ENCODE measurements at regions of chr14 and their contacts with region 1.

Region 1: GRCh38 chr14:22556990-22557623 is 31.9 kb downstream of the DAD1 start:
- DNase-seq: peak; percentile 93
- ATAC-seq: peak; percentile 42
- H3K4me3 ChIP-seq: peak overlapping the region; percentile 7 to 71 (median 49)
- H3K4me3 Mint-ChIP-seq: peak overlapping the region; percentile 73
- H3K27ac ChIP-seq: peak overlapping the region; percentile 99 to 100
- H3K27ac Mint-ChIP-seq: peak overlapping the region; percentile 97
- H3K4me1 ChIP-seq: peaks cover 61 to 85% of the 10 kb centered on the region in 2 donors
- H3K4me1 Mint-ChIP-seq: peaks cover 84% of the 10 kb centered on the region
- H3K27me3 ChIP-seq: no peaks in the 10 kb centered on the region
- H3K27me3 Mint-ChIP-seq: peaks cover 3% of the 10 kb centered on the region
- CTCF ChIP-seq: peak; percentile 100

Region 2: DNA sequence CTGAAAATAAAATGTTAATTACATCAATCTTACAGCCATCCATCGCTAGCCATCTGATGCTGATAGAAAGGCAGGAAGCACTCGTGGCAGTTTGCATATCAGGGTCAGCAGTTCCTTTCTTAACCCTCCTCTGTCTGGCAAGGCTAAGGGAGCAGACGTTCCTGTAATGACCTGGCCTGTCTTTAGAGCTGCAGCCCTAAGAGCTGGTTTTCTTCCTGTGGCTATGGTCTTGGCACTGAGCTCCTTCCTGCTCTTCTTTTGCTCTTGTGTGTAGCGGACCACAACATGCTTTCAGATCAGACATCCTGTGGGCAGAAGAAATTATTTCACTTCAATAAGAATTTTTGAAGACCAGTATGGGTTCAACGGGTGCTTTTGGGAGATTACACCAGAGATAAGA is 138.5 kb before region 1 on chr14:
- CTCF ChIA-PET with region 1: interaction called, 11 read pairs
- POLR2A ChIA-PET with region 1: interaction called, 4 read pairs
- intact Hi-C with region 1: no loop called
- DNase-seq: no peak
- ATAC-seq: peak; percentile 15
- H3K4me3 ChIP-seq: no peak overlapping the region
- H3K4me3 Mint-ChIP-seq: peak overlapping the region; percentile 11
- H3K27ac ChIP-seq: no peak overlapping the region
- H3K27ac Mint-ChIP-seq: no peak overlapping the region
- H3K4me1 ChIP-seq: peaks cover 24% of the 10 kb centered on the region in 2 donors
- H3K4me1 Mint-ChIP-seq: peaks cover 26% of the 10 kb centered on the region
- H3K27me3 ChIP-seq: no peaks in the 10 kb centered on the region
- H3K27me3 Mint-ChIP-seq: no peaks in the 10 kb centered on the region
- CTCF ChIP-seq: no peak

Region 3: DNA sequence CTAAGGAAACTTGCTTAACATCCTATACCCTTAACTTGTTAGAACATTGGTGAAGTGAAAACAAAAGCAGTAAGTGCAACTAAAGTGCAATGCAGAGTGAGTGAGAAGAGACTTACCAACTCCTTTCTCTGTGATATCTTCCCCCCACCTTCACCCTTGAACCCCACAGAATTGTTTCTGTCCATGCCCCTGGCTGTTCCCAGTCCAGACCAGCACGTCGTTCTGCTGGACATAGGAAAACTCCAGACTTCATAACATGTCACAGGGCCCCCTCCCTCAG is 60.0 kb before region 1 on chr14:
- CTCF ChIA-PET with region 1: interaction called, 44 read pairs
- POLR2A ChIA-PET with region 1: interaction called, 9 read pairs
- intact Hi-C with region 1: loop called (anchors 2 kb)
- DNase-seq: no peak
- ATAC-seq: peak; percentile 13
- H3K4me3 ChIP-seq: no peak overlapping the region
- H3K4me3 Mint-ChIP-seq: peak overlapping the region; percentile 54
- H3K27ac ChIP-seq: no peak overlapping the region
- H3K27ac Mint-ChIP-seq: peak overlapping the region; percentile 89
- H3K4me1 ChIP-seq: peaks cover 17 to 48% of the 10 kb centered on the region in 2 donors
- H3K4me1 Mint-ChIP-seq: peaks cover 68% of the 10 kb centered on the region
- H3K27me3 ChIP-seq: no peaks in the 10 kb centered on the region
- H3K27me3 Mint-ChIP-seq: no peaks in the 10 kb centered on the region
- CTCF ChIP-seq: no peak

Region 4: DNA sequence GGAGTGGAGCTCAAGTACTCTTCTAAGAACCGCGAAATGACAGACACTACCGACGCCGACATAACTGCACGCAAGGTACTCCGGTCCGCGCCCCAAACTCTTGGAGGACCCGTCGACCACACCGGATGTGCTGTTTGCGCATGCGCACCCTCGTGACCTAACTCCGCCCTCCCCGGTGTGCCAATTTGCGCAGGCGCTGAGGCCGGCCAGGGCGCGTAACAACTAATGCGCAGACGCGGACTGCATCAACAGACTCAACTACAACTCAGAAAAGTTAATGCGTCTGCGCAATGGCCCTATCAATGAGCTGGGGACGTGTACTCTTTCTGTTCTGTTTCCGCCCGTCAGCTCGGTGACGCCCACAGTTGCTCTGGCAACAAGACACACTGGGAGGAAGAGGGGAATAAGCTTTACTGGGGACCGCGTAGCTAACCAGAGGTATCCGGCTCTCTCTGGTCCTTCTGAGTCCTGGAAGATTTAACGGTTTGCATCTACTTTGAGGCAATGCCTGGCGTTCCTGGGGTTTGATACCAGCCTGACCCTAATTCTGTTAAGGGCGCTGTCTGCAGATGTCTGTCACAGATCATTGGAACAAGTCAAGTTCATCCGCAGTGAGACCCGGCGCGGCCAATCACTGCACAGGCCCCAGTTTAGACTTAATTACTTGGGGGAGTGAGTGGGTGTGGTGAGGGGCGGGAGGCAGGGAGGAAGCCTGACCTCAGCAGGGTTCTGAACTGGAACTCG is 32.2 kb after region 1 on chr14 and contains the start of gene DAD1:
- CTCF ChIA-PET with region 1: interaction called, 16 read pairs
- POLR2A ChIA-PET with region 1: no interaction called
- intact Hi-C with region 1: loop called (anchors 1 kb)
- DNase-seq: peak; percentile 100
- ATAC-seq: peak; percentile 89
- H3K4me3 ChIP-seq: peak within 1 kb of the TSS; percentile 75 to 84 (median 78)
- H3K4me3 Mint-ChIP-seq: peak within 1 kb of the TSS; percentile 99
- H3K27ac ChIP-seq: peak within 1 kb of the TSS; percentile 97
- H3K27ac Mint-ChIP-seq: peak within 1 kb of the TSS; percentile 96
- H3K4me1 ChIP-seq: peaks cover 30% of the 10 kb centered on the region in 2 donors
- H3K4me1 Mint-ChIP-seq: peaks cover 53% of the 10 kb centered on the region
- H3K27me3 ChIP-seq: no peaks in the 10 kb centered on the region
- H3K27me3 Mint-ChIP-seq: peaks cover 2% of the 10 kb centered on the region
- CTCF ChIP-seq: no peak
- total RNA-seq, gene DAD1: 76.1 and 77.4 TPM in 2 replicates

Region 5: DNA sequence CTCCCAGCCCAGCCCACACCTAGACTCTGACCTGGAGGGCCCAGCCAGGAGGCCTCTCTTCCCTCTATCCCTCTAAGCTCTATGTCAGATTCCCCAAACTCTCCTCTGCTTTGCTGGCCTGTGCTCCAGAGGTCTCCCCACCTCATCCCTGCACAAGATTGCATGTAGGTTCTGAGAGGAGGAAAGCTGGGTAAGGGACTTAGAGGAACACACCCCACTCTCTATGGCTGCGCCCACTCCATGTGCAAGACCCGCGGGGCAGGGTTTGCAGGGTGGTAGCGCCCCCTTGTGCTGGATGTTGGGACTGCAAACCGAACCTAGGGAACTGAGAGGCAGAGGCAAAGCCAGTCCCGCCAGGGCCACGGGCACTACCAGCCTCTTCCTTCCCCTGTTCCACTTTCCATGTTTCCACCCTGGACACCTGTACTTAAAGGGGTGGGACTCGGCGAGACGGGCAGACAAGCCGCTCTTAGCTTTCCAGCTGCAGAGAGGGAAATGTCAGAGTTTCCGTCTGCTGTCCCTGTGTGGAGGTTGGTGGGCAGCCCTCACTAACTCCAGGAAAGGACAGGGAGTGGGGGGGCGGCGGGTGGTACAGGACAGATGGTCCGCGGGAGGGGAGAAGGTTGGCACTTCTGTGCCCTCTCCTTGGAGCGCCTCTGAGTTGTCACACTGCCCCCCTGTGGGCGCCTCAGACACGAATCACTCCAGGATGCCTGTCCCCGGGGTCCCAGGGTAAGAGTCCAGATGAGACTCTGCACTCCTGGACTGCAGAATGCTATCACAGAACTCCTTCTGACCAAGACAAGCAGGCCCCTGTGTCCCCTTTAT is 296.0 kb after region 1 on chr14:
- CTCF ChIA-PET with region 1: interaction called, 26 read pairs
- POLR2A ChIA-PET with region 1: interaction called, 3 read pairs
- intact Hi-C with region 1: loop called (anchors 1 kb)
- DNase-seq: peak; percentile 91
- ATAC-seq: peak; percentile 95
- H3K4me3 ChIP-seq: peak overlapping the region; percentile 49 to 72 (median 63)
- H3K4me3 Mint-ChIP-seq: peak overlapping the region; percentile 88
- H3K27ac ChIP-seq: peak overlapping the region in 1 of 2 donors; percentile 42
- H3K27ac Mint-ChIP-seq: peak overlapping the region; percentile 85
- H3K4me1 ChIP-seq: peaks cover 0 to 8% of the 10 kb centered on the region in 2 donors
- H3K4me1 Mint-ChIP-seq: peaks cover 6% of the 10 kb centered on the region
- H3K27me3 ChIP-seq: peaks cover 0 to 5% (median 0%) of the 10 kb centered on the region in 4 experiments
- H3K27me3 Mint-ChIP-seq: peaks cover 6% of the 10 kb centered on the region
- CTCF ChIP-seq: peak; percentile 87

Region 6: GRCh38 chr14:23057757-23058653 is 500.9 kb after region 1 on chr14:
- CTCF ChIA-PET with region 1: interaction called, 6 read pairs
- POLR2A ChIA-PET with region 1: no interaction called
- intact Hi-C with region 1: loop called (anchors 5 kb)
- DNase-seq: peak; percentile 89
- ATAC-seq: peak; percentile 64
- H3K4me3 ChIP-seq: peak overlapping the region; percentile 11 to 91 (median 68)
- H3K4me3 Mint-ChIP-seq: peak overlapping the region; percentile 95
- H3K27ac ChIP-seq: no peak overlapping the region
- H3K27ac Mint-ChIP-seq: peak overlapping the region; percentile 76
- H3K4me1 ChIP-seq: peaks cover 10 to 21% of the 10 kb centered on the region in 2 donors
- H3K4me1 Mint-ChIP-seq: peaks cover 18% of the 10 kb centered on the region
- H3K27me3 ChIP-seq: peaks cover 0 to 6% (median 0%) of the 10 kb centered on the region in 4 experiments
- H3K27me3 Mint-ChIP-seq: no peaks in the 10 kb centered on the region
- CTCF ChIP-seq: peak; percentile 95